ENCODE measurements at regions of chr4 and their contacts with region 1.

Region 1: GRCh38 chr4:105520817-105521790 is 31.3 kb upstream of the ARHGEF38 start:
- DNase-seq: peak; percentile 66
- H3K4me3 Mint-ChIP-seq: no peak overlapping the region
- H3K27ac Mint-ChIP-seq: no peak overlapping the region
- H3K4me1 Mint-ChIP-seq: no peaks in the 10 kb centered on the region
- H3K27me3 Mint-ChIP-seq: peaks cover 5% of the 10 kb centered on the region

Region 2: DNA sequence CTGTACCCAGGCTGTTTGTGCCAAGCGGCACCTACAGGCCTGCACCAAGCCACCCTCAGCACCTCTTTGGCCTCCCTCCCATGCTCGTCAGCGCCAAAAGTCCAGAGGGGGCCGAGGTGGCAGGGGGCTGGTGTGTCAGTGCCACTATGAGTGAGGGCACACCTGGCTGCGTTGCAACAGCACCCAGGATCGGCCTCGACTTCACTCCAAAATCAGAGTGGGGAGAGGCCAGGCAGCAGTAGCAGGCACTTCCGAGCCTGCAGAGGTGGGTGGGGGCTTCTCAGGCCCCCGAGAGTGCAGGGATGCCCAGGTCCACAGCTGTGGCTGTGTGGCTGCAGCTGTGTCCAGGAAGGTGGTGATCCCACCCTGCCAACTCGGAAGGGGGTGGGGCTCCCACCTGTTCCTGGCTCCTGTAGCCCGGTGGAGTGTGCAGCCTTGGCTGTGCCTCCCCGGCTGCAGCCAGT is 105.8 kb before region 1 on chr4:
- intact Hi-C with region 1: no loop called
- DNase-seq: no peak
- H3K4me3 Mint-ChIP-seq: no peak overlapping the region
- H3K27ac Mint-ChIP-seq: no peak overlapping the region
- H3K4me1 Mint-ChIP-seq: peaks cover 2% of the 10 kb centered on the region
- H3K27me3 Mint-ChIP-seq: no peaks in the 10 kb centered on the region

Region 3: DNA sequence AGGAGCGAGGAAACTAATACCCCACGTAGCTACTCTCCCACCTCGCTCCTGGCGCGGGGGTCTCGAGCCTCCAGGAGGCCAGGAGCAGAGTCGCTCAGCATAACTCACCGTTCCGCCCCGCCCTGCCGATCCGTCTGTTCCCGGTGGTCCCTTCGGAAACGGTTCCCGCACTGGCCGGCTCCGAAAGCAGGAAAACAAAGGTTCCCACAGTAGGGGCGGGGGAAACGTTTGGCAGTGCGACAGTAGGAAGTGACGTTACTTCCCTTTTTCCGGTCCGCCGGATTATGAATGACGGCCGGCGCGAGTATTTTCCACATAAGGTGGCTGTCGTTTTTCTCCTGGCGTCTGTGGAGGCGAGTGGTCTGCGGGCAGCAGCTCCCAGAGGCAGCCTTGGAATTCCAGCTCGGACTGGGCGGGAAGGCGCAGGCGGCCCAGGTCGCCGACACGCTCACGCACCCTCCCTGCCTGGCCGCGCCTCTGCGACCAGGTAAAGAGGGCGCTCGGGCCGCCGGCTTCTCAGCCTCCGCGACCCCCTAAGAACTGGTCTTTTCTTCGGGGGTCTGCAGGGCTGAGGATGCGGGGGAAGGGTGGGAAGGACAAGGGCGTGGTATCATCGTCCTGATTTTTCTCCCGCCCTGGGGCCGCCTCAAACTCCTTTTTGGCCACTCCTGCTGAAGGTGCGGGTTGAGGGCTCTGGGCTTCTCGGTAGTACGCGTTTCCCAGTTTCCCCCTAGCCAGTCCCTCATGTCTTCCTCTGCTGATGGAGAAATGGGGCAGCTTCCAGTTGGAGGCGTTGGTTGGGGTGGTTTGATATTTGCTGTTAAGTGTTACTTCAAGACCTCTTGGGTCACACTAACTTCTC is 187.7 kb after region 1 on chr4 and contains the starts of genes GSTCD and INTS12:
- intact Hi-C with region 1: loop called (anchors 5 kb)
- DNase-seq: peak; percentile 96
- H3K4me3 Mint-ChIP-seq: peak within 1 kb of the TSS; percentile 99
- H3K27ac Mint-ChIP-seq: peak within 1 kb of the TSS; percentile 94
- H3K4me1 Mint-ChIP-seq: peaks cover 15% of the 10 kb centered on the region
- H3K27me3 Mint-ChIP-seq: no peaks in the 10 kb centered on the region
- total RNA-seq, gene GSTCD: 17.5 and 22.0 TPM in 2 replicates
- total RNA-seq, gene INTS12: 23.6 and 24.4 TPM in 2 replicates

Region 4: DNA sequence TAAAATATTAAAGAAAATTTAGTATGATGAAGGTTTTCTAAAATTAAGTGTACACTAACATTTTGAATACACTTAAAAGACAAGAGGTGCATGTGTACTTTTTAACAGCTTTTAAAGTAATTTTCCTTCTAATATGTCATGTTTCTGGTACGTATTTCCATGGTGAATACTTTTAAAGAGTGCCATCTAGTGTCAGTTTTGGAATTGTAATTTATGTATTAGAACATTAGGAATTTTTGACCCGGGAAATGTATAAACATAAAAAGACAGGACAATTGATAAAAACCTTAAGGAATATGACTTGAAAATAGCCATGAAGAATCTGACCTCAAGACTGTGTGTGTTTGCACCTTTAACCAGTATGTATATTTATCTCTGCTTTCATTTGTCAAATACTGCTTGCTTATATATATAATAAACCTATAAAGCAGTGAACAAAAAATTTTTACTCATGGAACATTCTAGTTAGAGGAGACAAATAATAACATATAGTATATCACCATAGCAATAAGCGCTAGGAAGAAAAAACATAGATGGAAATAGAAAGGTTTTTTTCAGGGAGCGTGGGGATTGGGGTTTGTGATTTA is 194.7 kb after region 1 on chr4:
- intact Hi-C with region 1: loop called (anchors 2 kb)
- DNase-seq: no peak
- H3K4me3 Mint-ChIP-seq: no peak overlapping the region
- H3K27ac Mint-ChIP-seq: no peak overlapping the region
- H3K4me1 Mint-ChIP-seq: peaks cover 4% of the 10 kb centered on the region
- H3K27me3 Mint-ChIP-seq: peaks cover 1% of the 10 kb centered on the region

Region 5: DNA sequence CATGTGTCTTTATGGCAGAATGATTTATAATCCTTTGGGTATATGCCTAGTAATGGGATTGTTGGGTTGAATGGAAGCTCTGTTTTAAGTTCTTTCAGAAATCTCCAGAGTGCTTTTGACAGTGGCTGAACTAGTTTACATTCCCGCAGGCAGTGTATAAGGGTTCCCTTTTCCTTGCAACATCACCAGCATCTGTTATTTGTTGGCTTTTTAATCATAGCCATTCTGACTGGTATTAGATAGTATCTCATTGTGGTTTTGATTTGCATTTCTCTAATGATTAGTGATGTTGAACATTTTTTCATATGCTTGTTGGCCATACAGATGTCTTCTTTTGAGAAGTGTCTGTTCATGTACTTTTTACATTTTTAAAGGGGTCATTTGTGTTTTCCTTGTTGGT is 665.1 kb after region 1 on chr4:
- intact Hi-C with region 1: no loop called
- DNase-seq: no peak
- H3K4me3 Mint-ChIP-seq: no peak overlapping the region
- H3K27ac Mint-ChIP-seq: no peak overlapping the region
- H3K4me1 Mint-ChIP-seq: no peaks in the 10 kb centered on the region
- H3K27me3 Mint-ChIP-seq: no peaks in the 10 kb centered on the region

Measured in activated CD4-positive, alpha-beta T cell treated with anti-CD3 and anti-CD28 coated beads, Interleukin-2, amount 10 ng/mL, durations not matched to agents 24 days and 14 days (primary cell).